CD8-positive, alpha-beta T cell (primary cell): ENCODE measurements at regions of chr6 and their contacts with region 1.

Region 1: DNA sequence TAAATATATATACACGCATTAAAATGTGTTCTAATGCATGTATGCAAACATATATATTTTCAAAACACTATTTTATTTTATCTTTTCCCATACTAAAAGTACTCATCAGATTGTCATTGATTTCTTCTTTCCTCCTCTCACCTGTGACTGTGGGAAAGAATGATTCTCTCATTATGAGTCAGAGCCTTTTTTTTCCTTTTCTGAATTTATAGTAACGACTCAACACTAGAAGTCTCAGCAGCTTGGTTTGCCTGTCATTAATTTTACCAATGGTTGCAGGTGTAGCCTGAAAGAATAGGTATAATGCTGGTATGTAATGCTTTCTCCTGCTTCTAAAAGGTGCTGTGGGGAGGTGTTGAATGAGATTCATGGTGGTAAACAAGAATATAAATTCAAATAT is 328.7 kb downstream of the UTRN start:
- DNase-seq: no peak
- ATAC-seq: no peak
- H3K4me3 ChIP-seq: no peak overlapping the region
- H3K4me3 Mint-ChIP-seq: no peak overlapping the region
- H3K27ac ChIP-seq: no peak overlapping the region
- H3K27ac Mint-ChIP-seq: no peak overlapping the region
- H3K4me1 ChIP-seq: no peaks in the 10 kb centered on the region
- H3K4me1 Mint-ChIP-seq: peaks cover 14% of the 10 kb centered on the region
- H3K27me3 ChIP-seq: no peaks in the 10 kb centered on the region
- H3K27me3 Mint-ChIP-seq: no peaks in the 10 kb centered on the region
- CTCF ChIP-seq: no peak

Region 2: DNA sequence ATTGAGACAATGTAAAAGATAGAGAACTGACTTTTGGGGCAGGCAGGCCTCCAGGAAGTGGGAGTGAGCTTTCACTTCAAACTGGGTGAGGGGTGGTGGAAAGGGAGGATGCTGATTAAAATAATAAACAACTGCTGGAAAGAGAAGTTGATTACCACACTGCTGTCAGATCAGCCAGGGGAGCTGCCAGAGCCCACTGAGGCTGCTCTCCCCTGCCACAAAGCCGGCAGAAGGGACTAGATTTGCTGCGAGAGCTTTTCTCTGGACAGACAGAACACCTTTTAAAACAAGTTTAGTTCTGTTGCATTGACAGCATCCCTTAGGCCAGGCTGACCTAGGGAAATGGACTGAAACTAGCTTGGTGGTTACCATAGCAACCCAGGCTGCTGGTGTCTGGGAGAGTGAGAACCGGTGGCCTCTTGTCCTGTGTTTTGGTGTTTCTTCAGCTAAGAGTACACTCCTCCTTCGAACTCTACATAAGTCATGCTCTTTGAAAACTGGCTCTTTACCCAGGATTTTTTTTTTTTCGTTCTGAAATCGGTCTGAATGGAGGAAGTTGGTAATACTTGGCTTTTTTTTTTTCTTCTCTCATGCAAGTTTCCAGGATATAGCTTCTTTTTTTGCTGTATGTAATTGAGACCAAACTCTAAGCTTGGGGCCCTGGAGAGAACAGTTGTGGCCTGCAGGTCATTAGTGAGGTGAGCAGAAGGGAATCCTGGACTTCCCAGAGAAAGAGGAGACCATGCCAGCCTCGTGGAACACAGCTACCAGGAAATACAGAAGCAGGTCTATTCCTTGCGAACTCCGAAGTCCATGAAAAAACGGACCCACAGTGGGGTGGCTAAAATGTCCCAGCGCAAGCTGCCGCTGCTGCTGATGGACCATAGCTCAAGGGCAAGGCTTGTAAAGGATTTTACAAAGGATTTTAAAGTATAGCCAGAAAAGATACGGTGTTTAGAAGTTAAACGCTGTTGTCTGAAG is 45.6 kb after region 1 on chr6:
- CTCF ChIA-PET with region 1: no interaction called
- POLR2A ChIA-PET with region 1: no interaction called
- intact Hi-C with region 1: loop called in 1 of 2 experiments (anchors 5 kb)
- DNase-seq: peak in 2 of 9 experiments; percentile 12 to 31
- ATAC-seq: no peak
- H3K4me3 ChIP-seq: no peak overlapping the region
- H3K4me3 Mint-ChIP-seq: peak overlapping the region; percentile 49
- H3K27ac ChIP-seq: peak overlapping the region in 1 of 2 experiments; percentile 56
- H3K27ac Mint-ChIP-seq: peak overlapping the region; percentile 86
- H3K4me1 ChIP-seq: peaks cover 20% of the 10 kb centered on the region
- H3K4me1 Mint-ChIP-seq: peaks cover 72% of the 10 kb centered on the region
- H3K27me3 ChIP-seq: no peaks in the 10 kb centered on the region
- H3K27me3 Mint-ChIP-seq: no peaks in the 10 kb centered on the region
- CTCF ChIP-seq: no peak